HepG2 (cell line): ENCODE measurements at regions of chr16 and their contacts with region 1.

Region 1: GRCh38 chr16:28873536-28874201 is 4.6 kb upstream of the ATP2A1 start:
- DNase-seq: no peak
- ATAC-seq: peak; percentile 73
- H3K4me3 ChIP-seq: no peak overlapping the region
- H3K27ac ChIP-seq: no peak overlapping the region
- H3K4me1 ChIP-seq: no peaks in the 10 kb centered on the region
- H3K27me3 ChIP-seq: no peaks in the 10 kb centered on the region
- CTCF ChIP-seq: peak; percentile 85
- EP300 ChIP-seq: no peak
- POLR2A ChIP-seq: no peak
- RAD21 ChIP-seq: peak; percentile 85

Region 2: GRCh38 chr16:27566417-27566816 is 1307.3 kb before region 1 on chr16:
- CTCF ChIA-PET with region 1: no interaction called
- POLR2A ChIA-PET with region 1: no interaction called
- in situ Hi-C with region 1: no loop called
- intact Hi-C with region 1: no loop called
- DNase-seq: no peak
- ATAC-seq: no peak
- H3K4me3 ChIP-seq: no peak overlapping the region
- H3K27ac ChIP-seq: no peak overlapping the region
- H3K4me1 ChIP-seq: no peaks in the 10 kb centered on the region
- H3K27me3 ChIP-seq: no peaks in the 10 kb centered on the region
- CTCF ChIP-seq: no peak
- EP300 ChIP-seq: no peak
- POLR2A ChIP-seq: no peak
- RAD21 ChIP-seq: no peak

Region 3: GRCh38 chr16:28943281-28943680 is 69.6 kb after region 1 on chr16:
- CTCF ChIA-PET with region 1: interaction called, 32 read pairs
- POLR2A ChIA-PET with region 1: interaction called, 3 read pairs
- in situ Hi-C with region 1: loop called (anchors 5 kb)
- intact Hi-C with region 1: no loop called
- DNase-seq: no peak
- ATAC-seq: no peak
- H3K4me3 ChIP-seq: no peak overlapping the region
- H3K27ac ChIP-seq: no peak overlapping the region
- H3K4me1 ChIP-seq: peaks cover 28% of the 10 kb centered on the region
- H3K27me3 ChIP-seq: no peaks in the 10 kb centered on the region
- CTCF ChIP-seq: no peak
- EP300 ChIP-seq: no peak
- POLR2A ChIP-seq: no peak
- RAD21 ChIP-seq: no peak